H1 (cell line): ENCODE measurements at regions of chr6 and their contacts with region 1.

Region 1: DNA sequence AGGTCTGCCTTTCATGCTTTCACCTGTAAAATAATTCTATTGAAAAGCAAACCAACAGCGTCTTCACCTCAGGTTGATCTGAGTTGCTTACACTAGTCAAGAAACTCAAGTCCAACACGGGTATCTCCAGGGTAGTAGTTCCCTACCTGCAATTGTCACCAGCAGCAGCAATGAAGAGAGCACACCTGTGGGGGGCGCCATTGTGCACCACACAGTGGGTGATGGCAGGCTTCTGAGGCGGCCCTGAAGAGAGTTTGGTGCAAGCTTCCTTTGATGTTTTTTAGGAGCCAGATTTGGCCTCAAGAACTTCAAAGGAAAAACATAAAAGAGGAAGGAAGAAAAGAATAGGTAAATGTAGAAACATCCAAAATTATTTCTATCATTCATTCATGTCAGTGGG is 45.1 kb downstream of the KIAA0319 start:
- DNase-seq: peak in 1 of 2 experiments; percentile 76
- H3K4me3 ChIP-seq: no peak overlapping the region
- H3K27ac ChIP-seq: no peak overlapping the region
- H3K4me1 ChIP-seq: no peaks in the 10 kb centered on the region
- H3K27me3 ChIP-seq: no peaks in the 10 kb centered on the region
- CTCF ChIP-seq: peak; percentile 67 to 85 (median 79)
- EP300 ChIP-seq: no peak
- POLR2A ChIP-seq: no peak
- RAD21 ChIP-seq: peak; percentile 72 to 80

Region 2: GRCh38 chr6:24614043-24614420 is 13.1 kb after region 1 on chr6:
- CTCF ChIA-PET with region 1: interaction called, 10 read pairs
- POLR2A ChIA-PET with region 1: no interaction called
- DNase-seq: no peak
- H3K4me3 ChIP-seq: no peak overlapping the region
- H3K27ac ChIP-seq: no peak overlapping the region
- H3K4me1 ChIP-seq: peaks cover 0 to 2% (median 0%) of the 10 kb centered on the region in 4 experiments; a peak in 2 of 7 replicates
- H3K27me3 ChIP-seq: no peaks in the 10 kb centered on the region
- CTCF ChIP-seq: no peak
- EP300 ChIP-seq: no peak
- POLR2A ChIP-seq: no peak
- RAD21 ChIP-seq: no peak

Region 3: GRCh38 chr6:24980507-24981387 is 379.8 kb after region 1 on chr6:
- CTCF ChIA-PET with region 1: no interaction called
- POLR2A ChIA-PET with region 1: no interaction called
- DNase-seq: peak in 1 of 2 experiments; percentile 65
- H3K4me3 ChIP-seq: peak overlapping the region in 3 of 4 experiments; percentile 6 to 46 (median 13); a peak in 4 of 8 replicates
- H3K27ac ChIP-seq: peak overlapping the region; percentile 96
- H3K4me1 ChIP-seq: peaks cover 17 to 42% (median 31%) of the 10 kb centered on the region in 4 experiments; a peak in 6 of 7 replicates
- H3K27me3 ChIP-seq: no peaks in the 10 kb centered on the region
- CTCF ChIP-seq: no peak
- EP300 ChIP-seq: peak in 1 of 2 experiments; percentile 76; a peak in 1 of 3 replicates
- POLR2A ChIP-seq: peak; percentile 45 to 86
- RAD21 ChIP-seq: no peak; a peak in 1 of 4 replicates